ENCODE measurements at regions of chr10 and their contacts with region 1.

Region 1: GRCh38 chr10:102394079-102394800 is 1.3 kb upstream of the NFKB2 start:
- H3K4me3 Mint-ChIP-seq: peak overlapping the region; percentile 100
- H3K27ac Mint-ChIP-seq: peak overlapping the region; percentile 100
- H3K4me1 Mint-ChIP-seq: peaks cover 50% of the 10 kb centered on the region
- H3K27me3 Mint-ChIP-seq: peaks cover 20% of the 10 kb centered on the region

Region 2: GRCh38 chr10:102420810-102421644 is 26.8 kb after region 1 on chr10 and contains the start of gene FBXL15:
- intact Hi-C with region 1: loop called (anchors 1 kb)
- H3K4me3 Mint-ChIP-seq: peak within 1 kb of the TSS; percentile 85
- H3K27ac Mint-ChIP-seq: peak within 1 kb of the TSS; percentile 93
- H3K4me1 Mint-ChIP-seq: peaks cover 63% of the 10 kb centered on the region
- H3K27me3 Mint-ChIP-seq: peaks cover 36% of the 10 kb centered on the region

Region 3: DNA sequence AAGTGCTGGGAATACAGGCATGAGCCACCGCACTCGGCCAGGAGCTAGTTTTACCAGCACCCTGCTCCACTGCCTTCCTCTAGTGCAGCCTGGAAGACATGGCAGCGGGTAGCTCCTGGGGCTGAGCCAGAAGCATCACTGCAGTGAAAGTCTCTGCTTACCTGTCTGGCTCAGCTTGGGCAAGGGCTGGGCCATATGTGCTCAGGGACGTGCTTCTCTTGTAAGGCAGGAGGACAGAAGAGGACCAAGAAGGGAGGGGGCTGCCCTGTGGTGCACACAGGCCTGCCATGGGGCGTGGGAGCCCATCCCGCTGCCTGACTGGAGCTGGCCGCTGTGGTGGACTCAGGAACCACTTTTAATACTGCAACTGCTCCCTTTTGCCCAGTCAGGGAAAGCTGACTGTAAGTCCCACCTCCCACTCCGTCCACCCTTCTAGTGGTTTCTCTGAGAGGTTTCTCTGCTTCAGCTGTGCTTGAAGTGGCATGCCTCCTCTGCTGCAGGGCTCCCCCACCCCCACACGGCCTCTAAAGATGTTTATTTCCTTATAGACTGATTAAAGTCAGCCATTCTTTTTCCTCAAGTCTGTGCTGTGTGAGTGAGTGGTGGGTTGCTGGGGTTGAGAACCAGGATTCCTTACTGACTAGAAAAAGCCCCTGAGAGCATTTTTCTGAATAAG is 82.4 kb after region 1 on chr10:
- intact Hi-C with region 1: loop called (anchors 2 kb)
- H3K4me3 Mint-ChIP-seq: no peak overlapping the region
- H3K27ac Mint-ChIP-seq: no peak overlapping the region
- H3K4me1 Mint-ChIP-seq: peaks cover 10% of the 10 kb centered on the region
- H3K27me3 Mint-ChIP-seq: no peaks in the 10 kb centered on the region

Region 4: GRCh38 chr10:102583435-102584417 is 189.5 kb after region 1 on chr10:
- intact Hi-C with region 1: loop called (anchors 5 kb)
- H3K4me3 Mint-ChIP-seq: no peak overlapping the region
- H3K27ac Mint-ChIP-seq: no peak overlapping the region
- H3K4me1 Mint-ChIP-seq: peaks cover 34% of the 10 kb centered on the region
- H3K27me3 Mint-ChIP-seq: no peaks in the 10 kb centered on the region